ENCODE measurements at regions of chr3 and their contacts with region 1.

Region 1: GRCh38 chr3:52536369-52537164 is at the start of gene UQCC5:
- DNase-seq: peak; percentile 99
- ATAC-seq: peak; percentile 84
- H3K4me3 ChIP-seq: peak within 1 kb of the TSS; percentile 90 to 99 (median 95)
- H3K4me3 Mint-ChIP-seq: peak within 1 kb of the TSS; percentile 99
- H3K27ac ChIP-seq: peak within 1 kb of the TSS; percentile 84 to 93
- H3K27ac Mint-ChIP-seq: peak within 1 kb of the TSS; percentile 99
- H3K4me1 ChIP-seq: peaks cover 34 to 51% of the 10 kb centered on the region in 2 donors
- H3K4me1 Mint-ChIP-seq: peaks cover 46% of the 10 kb centered on the region
- H3K27me3 ChIP-seq: peaks cover 0 to 13% (median 0%) of the 10 kb centered on the region in 4 experiments
- H3K27me3 Mint-ChIP-seq: no peaks in the 10 kb centered on the region
- CTCF ChIP-seq: no peak
- total RNA-seq, gene UQCC5: 10.3 and 16.4 TPM in 2 replicates

Region 2: GRCh38 chr3:51391075-51391567 is 1145.4 kb before region 1 on chr3 and contains the start of gene RBM15B:
- CTCF ChIA-PET with region 1: no interaction called
- POLR2A ChIA-PET with region 1: no interaction called
- intact Hi-C with region 1: loop called (anchors 10 kb)
- DNase-seq: peak; percentile 97
- ATAC-seq: peak; percentile 95
- H3K4me3 ChIP-seq: peak within 1 kb of the TSS; percentile 11 to 66 (median 58)
- H3K4me3 Mint-ChIP-seq: peak within 1 kb of the TSS; percentile 84
- H3K27ac ChIP-seq: peak within 1 kb of the TSS; percentile 71 to 78
- H3K27ac Mint-ChIP-seq: peak within 1 kb of the TSS; percentile 88
- H3K4me1 ChIP-seq: peaks cover 24 to 41% of the 10 kb centered on the region in 2 donors
- H3K4me1 Mint-ChIP-seq: peaks cover 54% of the 10 kb centered on the region
- H3K27me3 ChIP-seq: no peaks in the 10 kb centered on the region
- H3K27me3 Mint-ChIP-seq: no peaks in the 10 kb centered on the region
- CTCF ChIP-seq: peak; percentile 87
- total RNA-seq, gene RBM15B: 29.5 and 30.5 TPM in 2 replicates

Region 3: GRCh38 chr3:51559411-51559888 is 977.1 kb before region 1 on chr3:
- CTCF ChIA-PET with region 1: no interaction called
- POLR2A ChIA-PET with region 1: no interaction called
- intact Hi-C with region 1: no loop called
- DNase-seq: no peak
- ATAC-seq: no peak
- H3K4me3 ChIP-seq: no peak overlapping the region
- H3K4me3 Mint-ChIP-seq: no peak overlapping the region
- H3K27ac ChIP-seq: no peak overlapping the region
- H3K27ac Mint-ChIP-seq: no peak overlapping the region
- H3K4me1 ChIP-seq: no peaks in the 10 kb centered on the region
- H3K4me1 Mint-ChIP-seq: peaks cover 3% of the 10 kb centered on the region
- H3K27me3 ChIP-seq: no peaks in the 10 kb centered on the region
- H3K27me3 Mint-ChIP-seq: no peaks in the 10 kb centered on the region
- CTCF ChIP-seq: no peak

Region 4: GRCh38 chr3:51982782-51983577 is 553.6 kb before region 1 on chr3 and contains the start of gene ACY1:
- CTCF ChIA-PET with region 1: no interaction called
- POLR2A ChIA-PET with region 1: no interaction called
- intact Hi-C with region 1: no loop called
- DNase-seq: peak; percentile 72
- ATAC-seq: peak; percentile 79
- H3K4me3 ChIP-seq: peak within 1 kb of the TSS; percentile 47 to 68 (median 58)
- H3K4me3 Mint-ChIP-seq: peak within 1 kb of the TSS; percentile 92
- H3K27ac ChIP-seq: peak within 1 kb of the TSS; percentile 65 to 76
- H3K27ac Mint-ChIP-seq: peak within 1 kb of the TSS; percentile 93
- H3K4me1 ChIP-seq: peaks cover 10 to 19% of the 10 kb centered on the region in 2 donors
- H3K4me1 Mint-ChIP-seq: peaks cover 17% of the 10 kb centered on the region
- H3K27me3 ChIP-seq: no peaks in the 10 kb centered on the region
- H3K27me3 Mint-ChIP-seq: no peaks in the 10 kb centered on the region
- CTCF ChIP-seq: peak; percentile 46
- total RNA-seq, gene ACY1: 11.6 and 14.6 TPM in 2 replicates

Region 5: GRCh38 chr3:52455283-52456168 is 81.0 kb before region 1 on chr3 and contains the start of gene NISCH:
- CTCF ChIA-PET with region 1: no interaction called
- POLR2A ChIA-PET with region 1: no interaction called
- intact Hi-C with region 1: loop called (anchors 1 kb)
- DNase-seq: peak; percentile 94
- ATAC-seq: peak; percentile 97
- H3K4me3 ChIP-seq: peak within 1 kb of the TSS; percentile 50 to 81 (median 70)
- H3K4me3 Mint-ChIP-seq: peak within 1 kb of the TSS; percentile 88
- H3K27ac ChIP-seq: peak within 1 kb of the TSS; percentile 88 to 92
- H3K27ac Mint-ChIP-seq: peak within 1 kb of the TSS; percentile 94
- H3K4me1 ChIP-seq: peaks cover 16 to 27% of the 10 kb centered on the region in 2 donors
- H3K4me1 Mint-ChIP-seq: peaks cover 38% of the 10 kb centered on the region
- H3K27me3 ChIP-seq: no peaks in the 10 kb centered on the region
- H3K27me3 Mint-ChIP-seq: no peaks in the 10 kb centered on the region
- CTCF ChIP-seq: no peak
- total RNA-seq, gene NISCH: 161 and 169 TPM in 2 replicates

Region 6: GRCh38 chr3:52705688-52706686 is 169.4 kb after region 1 on chr3 and contains the starts of genes GLT8D1 and SPCS1:
- CTCF ChIA-PET with region 1: no interaction called
- POLR2A ChIA-PET with region 1: no interaction called
- intact Hi-C with region 1: loop called (anchors 1 kb)
- DNase-seq: peak; percentile 97
- ATAC-seq: peak; percentile 86
- H3K4me3 ChIP-seq: peak within 1 kb of the TSS; percentile 75 to 91 (median 82)
- H3K4me3 Mint-ChIP-seq: peak within 1 kb of the TSS; percentile 96
- H3K27ac ChIP-seq: peak within 1 kb of the TSS; percentile 66 to 95
- H3K27ac Mint-ChIP-seq: peak within 1 kb of the TSS; percentile 97
- H3K4me1 ChIP-seq: peaks cover 40 to 44% of the 10 kb centered on the region in 2 donors
- H3K4me1 Mint-ChIP-seq: peaks cover 46% of the 10 kb centered on the region
- H3K27me3 ChIP-seq: no peaks in the 10 kb centered on the region
- H3K27me3 Mint-ChIP-seq: no peaks in the 10 kb centered on the region
- CTCF ChIP-seq: no peak
- total RNA-seq, gene GLT8D1: 28.7 and 32.5 TPM in 2 replicates
- total RNA-seq, gene SPCS1: 54.3 and 64.5 TPM in 2 replicates

Region 7: GRCh38 chr3:53160660-53161449 is 624.3 kb after region 1 on chr3 and contains the start of gene PRKCD:
- CTCF ChIA-PET with region 1: no interaction called
- POLR2A ChIA-PET with region 1: interaction called, 3 read pairs
- intact Hi-C with region 1: loop called (anchors 10 kb)
- DNase-seq: peak; percentile 91
- ATAC-seq: peak; percentile 70
- H3K4me3 ChIP-seq: peak within 1 kb of the TSS; percentile 46 to 98 (median 86)
- H3K4me3 Mint-ChIP-seq: peak within 1 kb of the TSS; percentile 94
- H3K27ac ChIP-seq: peak within 1 kb of the TSS; percentile 80 to 82
- H3K27ac Mint-ChIP-seq: peak within 1 kb of the TSS; percentile 96
- H3K4me1 ChIP-seq: peaks cover 44 to 67% of the 10 kb centered on the region in 2 donors
- H3K4me1 Mint-ChIP-seq: peaks cover 54% of the 10 kb centered on the region
- H3K27me3 ChIP-seq: peaks cover 0 to 12% (median 5%) of the 10 kb centered on the region in 4 experiments
- H3K27me3 Mint-ChIP-seq: peaks cover 2% of the 10 kb centered on the region
- CTCF ChIP-seq: peak; percentile 70
- total RNA-seq, gene PRKCD: 42.7 and 46.7 TPM in 2 replicates